ENCODE measurements at regions of chr15 and their contacts with region 1.

Region 1: DNA sequence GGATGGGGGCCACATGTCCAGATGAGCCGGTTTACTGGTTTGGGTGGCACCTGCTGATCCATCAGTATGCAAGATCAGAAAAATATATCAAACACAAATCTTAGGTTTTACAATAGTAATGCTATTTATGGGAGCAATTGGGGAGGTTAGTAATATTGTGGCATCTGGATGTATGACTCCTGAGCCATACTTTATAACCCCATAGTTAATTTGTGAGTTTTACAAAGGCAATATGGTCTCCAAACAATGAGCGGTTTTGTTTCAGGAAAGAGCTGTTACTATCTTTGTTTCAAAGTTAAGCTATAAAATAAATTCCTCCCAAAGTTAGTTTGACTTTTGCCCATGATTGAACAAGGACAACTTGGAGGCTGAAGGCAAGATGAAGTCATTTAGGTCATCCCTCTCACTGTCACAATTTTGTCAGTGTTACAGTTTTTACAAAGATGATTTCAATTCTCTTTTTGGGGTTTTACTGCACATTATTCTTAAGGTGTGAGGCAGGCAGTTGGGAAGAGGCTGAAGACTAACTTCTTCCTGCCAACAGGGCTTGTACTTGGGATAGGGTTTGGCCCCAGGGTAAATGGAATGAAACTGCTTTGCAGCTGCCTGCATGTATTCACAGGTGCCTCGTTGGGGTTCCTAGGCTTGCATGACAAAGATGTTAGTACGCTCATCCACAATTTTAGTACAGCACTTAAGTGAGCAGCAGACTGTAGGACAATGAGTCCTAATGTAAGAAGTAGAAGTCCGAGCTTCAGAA is 296.6 kb upstream of the NDN start:
- DNase-seq: no peak
- ATAC-seq: no peak
- H3K4me3 ChIP-seq: no peak overlapping the region
- H3K27ac ChIP-seq: no peak overlapping the region
- H3K4me1 ChIP-seq: no peaks in the 10 kb centered on the region
- H3K27me3 ChIP-seq: no peaks in the 10 kb centered on the region
- CTCF ChIP-seq: no peak

Region 2: DNA sequence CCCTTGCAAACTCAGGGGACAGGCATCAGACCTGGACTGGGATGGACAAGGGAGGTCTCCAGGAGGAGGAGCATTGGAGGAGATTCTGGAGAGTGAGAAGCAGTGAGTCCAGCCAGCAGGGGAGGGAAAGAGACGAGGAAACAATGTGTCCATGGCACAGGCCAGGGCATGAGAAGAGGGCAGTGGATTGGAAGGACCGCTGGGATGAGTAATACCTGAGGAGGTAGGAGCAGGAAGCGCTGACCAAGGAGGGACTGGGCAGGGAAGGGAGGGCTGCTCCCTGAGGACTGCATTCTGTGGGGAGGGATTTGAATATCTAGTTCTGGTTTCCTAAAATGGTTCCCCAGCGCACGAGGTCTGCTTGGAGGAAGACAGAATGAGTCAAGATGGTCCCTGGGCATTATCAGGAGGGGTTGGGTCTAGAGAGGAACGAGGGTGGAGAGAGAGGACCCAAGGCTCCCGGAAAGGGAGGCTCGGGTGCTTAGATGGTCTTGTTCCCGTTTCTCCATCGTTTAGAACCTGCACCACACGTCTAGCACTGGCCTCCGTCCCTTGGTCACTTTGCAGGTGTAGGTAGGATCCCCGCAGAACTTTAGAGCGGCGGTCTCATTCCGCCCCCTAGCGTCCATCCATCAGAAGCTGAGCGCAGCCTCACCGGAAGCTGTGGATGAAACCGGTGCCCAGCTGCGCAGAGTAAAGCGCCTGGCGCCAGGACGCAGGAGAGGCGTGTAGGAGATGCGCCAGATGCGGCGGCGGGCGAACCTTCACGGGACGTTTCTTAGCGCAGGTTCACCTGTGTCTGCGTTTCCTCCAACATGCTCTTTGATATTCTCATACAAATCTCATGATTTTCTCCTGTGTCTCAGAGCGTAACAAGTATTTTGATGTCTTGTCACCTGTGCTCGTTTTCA is 105.9 kb before region 1 on chr15:
- intact Hi-C with region 1: no loop called
- DNase-seq: peak; percentile 22 to 31
- ATAC-seq: peak in 6 of 8 donors; percentile 53 to 81 (median 62)
- H3K4me3 ChIP-seq: no peak overlapping the region
- H3K27ac ChIP-seq: no peak overlapping the region
- H3K4me1 ChIP-seq: no peaks in the 10 kb centered on the region
- H3K27me3 ChIP-seq: peaks cover 0 to 10% (median 0%) of the 10 kb centered on the region in 7 donors
- CTCF ChIP-seq: peak; percentile 41 to 65 (median 58)

Region 3: DNA sequence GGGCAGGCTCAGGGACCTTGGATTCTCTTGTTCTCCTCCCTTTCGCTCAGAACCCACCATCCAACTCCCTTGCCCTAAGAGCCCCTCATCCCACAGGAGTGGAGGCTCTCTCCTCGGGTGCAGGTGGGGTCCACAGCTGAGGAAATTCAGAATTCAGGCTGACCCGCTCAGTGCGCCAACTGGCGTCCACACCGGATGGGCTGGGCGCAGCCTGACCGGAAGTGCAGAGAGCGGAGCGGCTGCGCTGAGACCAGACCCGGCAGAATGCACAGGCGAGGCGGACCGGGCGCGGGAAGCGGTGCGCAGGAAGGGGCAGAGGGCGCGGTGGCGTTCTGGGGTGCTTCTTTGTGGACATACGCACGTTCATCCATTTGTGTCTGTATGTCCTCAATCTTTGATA is 86.1 kb before region 1 on chr15:
- intact Hi-C with region 1: loop called in 1 of 10 experiments (anchors 10 kb)
- DNase-seq: peak in 1 of 2 donors; percentile 12
- ATAC-seq: peak in 1 of 8 donors; percentile 63
- H3K4me3 ChIP-seq: peak overlapping the region in 5 of 10 donors; percentile 7 to 33 (median 26)
- H3K27ac ChIP-seq: no peak overlapping the region
- H3K4me1 ChIP-seq: no peaks in the 10 kb centered on the region
- H3K27me3 ChIP-seq: no peaks in the 10 kb centered on the region
- CTCF ChIP-seq: no peak

Region 4: DNA sequence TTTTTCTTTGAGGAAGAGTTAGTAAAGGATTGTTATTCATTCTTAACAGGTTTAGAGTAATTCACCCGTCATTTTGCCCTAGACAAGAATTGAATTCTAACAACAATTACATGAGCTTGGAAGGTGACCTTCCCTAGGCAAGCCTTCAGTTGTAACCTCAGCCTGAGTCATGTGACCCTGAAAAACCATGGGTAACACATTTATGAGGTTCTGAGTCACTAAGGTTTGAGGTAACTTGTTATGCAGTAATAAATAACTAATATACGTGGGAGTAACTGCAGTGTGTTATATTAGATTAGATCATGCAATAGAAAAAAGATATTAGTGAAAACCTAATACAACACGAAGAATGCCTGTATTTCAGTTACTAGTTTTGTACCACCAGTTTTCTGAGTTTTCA is 59.0 kb before region 1 on chr15:
- intact Hi-C with region 1: loop called in 1 of 10 experiments (anchors 10 kb)
- DNase-seq: no peak
- ATAC-seq: no peak
- H3K4me3 ChIP-seq: no peak overlapping the region
- H3K27ac ChIP-seq: no peak overlapping the region
- H3K4me1 ChIP-seq: no peaks in the 10 kb centered on the region
- H3K27me3 ChIP-seq: no peaks in the 10 kb centered on the region
- CTCF ChIP-seq: no peak

Region 5: DNA sequence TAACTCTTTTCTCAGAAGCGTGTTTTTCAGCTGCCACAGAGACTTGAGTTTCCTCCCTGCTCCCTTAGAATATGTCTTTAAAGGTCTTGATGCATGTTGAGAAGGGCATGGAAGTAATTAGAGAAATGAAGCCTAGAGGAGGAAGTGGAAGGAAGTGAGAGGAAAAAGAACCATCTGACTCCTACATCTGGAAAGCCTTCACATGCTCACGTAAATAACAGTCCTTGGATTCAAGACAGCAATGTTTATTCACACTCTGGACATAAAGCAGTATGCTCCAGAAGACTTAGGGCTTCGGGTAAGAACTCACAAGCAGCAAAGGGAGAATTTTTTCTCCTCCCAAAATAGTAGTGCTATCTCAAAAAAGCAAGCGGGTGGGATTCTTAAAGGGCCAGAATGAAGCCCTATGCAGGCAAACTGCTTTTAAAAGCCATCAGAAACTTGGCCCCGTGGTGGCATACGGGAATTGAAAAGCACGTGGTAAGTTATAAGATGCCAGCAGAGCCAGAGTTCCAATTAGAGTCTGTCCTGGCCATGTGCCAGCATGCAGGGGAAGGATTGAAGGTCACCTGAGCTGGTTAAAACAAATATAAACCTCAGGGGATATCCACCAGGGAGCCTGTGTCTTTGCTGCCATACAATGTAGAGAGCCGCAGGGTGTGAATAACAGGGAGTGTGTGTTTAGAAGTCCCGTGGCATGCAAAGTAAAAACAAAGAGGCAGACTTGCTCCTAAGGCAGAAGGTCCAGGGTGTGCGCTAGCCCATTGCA is 84.2 kb after region 1 on chr15:
- intact Hi-C with region 1: no loop called
- DNase-seq: no peak
- ATAC-seq: no peak
- H3K4me3 ChIP-seq: no peak overlapping the region
- H3K27ac ChIP-seq: no peak overlapping the region
- H3K4me1 ChIP-seq: no peaks in the 10 kb centered on the region
- H3K27me3 ChIP-seq: no peaks in the 10 kb centered on the region
- CTCF ChIP-seq: no peak